GM23248 (cell line): ENCODE measurements at regions of chr10 and their contacts with region 1.

Region 1: GRCh38 chr10:13659897-13660550 is 73.3 kb downstream of the PRPF18 start:
- DNase-seq: peak; percentile 77
- H3K4me3 ChIP-seq: no peak overlapping the region
- H3K27ac ChIP-seq: peak overlapping the region; percentile 41
- H3K4me1 ChIP-seq: peaks cover 14% of the 10 kb centered on the region
- H3K27me3 ChIP-seq: no peaks in the 10 kb centered on the region

Region 2: DNA sequence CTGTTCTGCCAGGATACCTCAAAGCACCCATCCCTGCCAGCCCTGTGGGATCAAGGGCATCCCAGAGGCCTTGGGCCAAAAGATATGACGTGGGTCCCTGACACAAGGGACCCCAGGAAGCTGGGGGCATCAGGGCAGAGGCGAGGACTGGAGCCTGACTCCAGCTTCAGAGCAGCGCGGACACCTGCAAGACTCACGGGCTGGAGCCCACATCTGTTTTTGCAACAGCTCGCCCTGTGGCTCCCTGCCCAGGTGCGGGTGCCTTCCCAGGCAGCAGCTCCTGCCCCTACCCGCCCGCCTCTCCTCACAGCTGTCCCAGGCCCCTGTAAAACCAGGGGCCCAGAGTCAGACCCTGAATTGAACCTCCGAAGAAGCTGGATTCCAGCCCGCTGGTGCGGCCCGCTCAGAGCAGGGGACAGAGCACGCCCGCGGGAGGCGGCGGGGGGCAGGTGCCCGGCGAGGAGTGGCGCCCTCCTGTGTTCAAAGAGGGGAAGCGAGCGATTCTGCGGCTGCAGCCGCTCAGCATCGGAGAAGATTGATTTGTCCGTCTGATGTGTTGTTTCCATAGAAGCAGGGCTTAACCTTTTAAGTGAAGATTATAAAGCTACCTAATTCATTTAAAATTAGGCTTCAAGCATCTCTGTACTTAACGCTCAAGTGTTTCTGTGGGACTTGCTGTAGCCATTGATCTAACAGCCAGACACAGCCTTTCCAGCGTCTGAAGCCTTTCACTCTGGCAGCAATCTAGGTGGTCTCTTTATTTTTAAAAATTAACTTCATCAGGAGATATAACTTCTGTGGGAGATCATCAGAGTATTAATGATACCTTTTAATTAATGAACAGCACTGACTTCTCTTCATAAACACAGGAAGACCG is 219.6 kb before region 1 on chr10:
- in situ Hi-C with region 1: no loop called
- DNase-seq: peak; percentile 71
- H3K4me3 ChIP-seq: peak overlapping the region; percentile 43
- H3K27ac ChIP-seq: no peak overlapping the region
- H3K4me1 ChIP-seq: no peaks in the 10 kb centered on the region
- H3K27me3 ChIP-seq: peaks cover 26% of the 10 kb centered on the region

Region 3: GRCh38 chr10:13784067-13784466 is 124.0 kb after region 1 on chr10:
- in situ Hi-C with region 1: loop called (anchors 5 kb)
- DNase-seq: peak; percentile 75
- H3K4me3 ChIP-seq: no peak overlapping the region
- H3K27ac ChIP-seq: no peak overlapping the region
- H3K4me1 ChIP-seq: peaks cover 13% of the 10 kb centered on the region
- H3K27me3 ChIP-seq: no peaks in the 10 kb centered on the region